Activated naive CD4-positive, alpha-beta T cell treated with anti-CD3 and anti-CD28 coated beads for 36 hours (primary cell): ENCODE measurements at regions of chrX and their contacts with region 1.

Region 1: GRCh38 chrX:16870095-16870860 is at the start of gene RBBP7:
- DNase-seq: peak; percentile 91
- H3K4me3 Mint-ChIP-seq: peak within 1 kb of the TSS; percentile 96
- H3K27ac Mint-ChIP-seq: peak within 1 kb of the TSS; percentile 98
- H3K4me1 Mint-ChIP-seq: peaks cover 25% of the 10 kb centered on the region
- H3K27me3 Mint-ChIP-seq: no peaks in the 10 kb centered on the region
- total RNA-seq, gene RBBP7: 213 to 228 TPM

Region 2: GRCh38 chrX:16678689-16679088 is 191.6 kb before region 1 on chrX:
- CTCF ChIA-PET with region 1: no interaction called
- intact Hi-C with region 1: no loop called
- DNase-seq: no peak
- H3K4me3 Mint-ChIP-seq: no peak overlapping the region
- H3K27ac Mint-ChIP-seq: no peak overlapping the region
- H3K4me1 Mint-ChIP-seq: no peaks in the 10 kb centered on the region
- H3K27me3 Mint-ChIP-seq: no peaks in the 10 kb centered on the region

Region 3: DNA sequence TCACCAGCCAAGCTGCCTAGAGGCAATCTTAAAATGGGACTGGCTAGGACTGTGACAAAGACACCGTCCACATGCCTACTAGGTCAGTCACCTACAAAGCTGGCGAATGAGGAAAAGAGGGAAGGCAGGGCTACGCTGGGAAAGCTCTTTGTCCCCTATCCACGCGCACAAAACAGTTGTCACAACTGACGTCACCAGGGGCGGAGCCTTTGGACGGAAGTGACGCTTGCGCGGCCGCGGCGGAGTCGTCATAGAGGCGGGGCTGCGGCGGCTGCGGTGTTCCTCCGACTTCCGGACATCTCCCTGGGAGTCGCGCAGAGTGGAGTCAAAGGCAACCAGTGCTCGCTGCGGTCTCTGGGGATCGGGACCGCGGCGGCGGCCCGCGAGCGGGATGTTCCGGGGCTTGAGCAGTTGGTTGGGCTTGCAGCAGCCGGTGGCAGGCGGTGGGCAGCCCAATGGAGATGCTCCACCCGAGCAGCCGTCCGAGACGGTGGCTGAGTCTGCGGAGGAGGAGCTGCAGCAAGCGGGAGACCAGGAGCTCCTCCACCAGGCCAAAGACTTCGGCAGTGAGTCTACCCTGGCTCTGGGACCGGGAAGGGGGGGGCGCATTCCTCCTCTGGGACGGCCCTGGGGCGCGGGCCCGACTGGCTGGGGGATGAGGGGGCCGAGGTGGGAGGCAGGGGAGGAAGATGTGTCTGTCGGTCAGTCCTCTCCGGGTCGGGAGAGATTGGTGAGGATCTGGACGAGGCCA is 150.8 kb before region 1 on chrX and contains the start of gene SYAP1:
- CTCF ChIA-PET with region 1: no interaction called
- intact Hi-C with region 1: loop called (anchors 5 kb)
- DNase-seq: peak; percentile 93
- H3K4me3 Mint-ChIP-seq: peak within 1 kb of the TSS; percentile 89
- H3K27ac Mint-ChIP-seq: peak within 1 kb of the TSS; percentile 92
- H3K4me1 Mint-ChIP-seq: peaks cover 33% of the 10 kb centered on the region
- H3K27me3 Mint-ChIP-seq: no peaks in the 10 kb centered on the region
- total RNA-seq, gene SYAP1: 17.1 to 18.9 TPM

Region 4: DNA sequence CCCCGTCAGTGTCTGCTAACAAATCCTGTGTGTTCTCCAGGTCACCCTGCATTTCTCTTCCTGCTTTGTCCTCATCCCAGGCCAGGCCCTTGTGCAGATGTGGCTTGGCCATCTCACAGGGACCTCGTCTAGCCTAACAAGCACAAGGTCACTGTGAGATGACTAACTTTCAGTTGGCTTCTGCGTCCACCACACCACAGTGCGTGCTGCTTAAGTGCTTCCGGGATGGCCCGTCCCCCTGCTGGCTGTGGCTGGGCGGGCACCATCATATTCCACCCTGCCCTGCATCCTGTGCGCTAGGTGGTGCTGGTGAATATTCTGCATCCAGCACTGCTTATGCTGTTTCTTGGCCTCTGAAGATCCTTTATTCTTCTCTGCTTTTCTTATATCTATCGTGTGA is 33.9 kb before region 1 on chrX:
- CTCF ChIA-PET with region 1: interaction called, 4 read pairs
- intact Hi-C with region 1: loop called (anchors 5 kb)
- DNase-seq: no peak
- H3K4me3 Mint-ChIP-seq: no peak overlapping the region
- H3K27ac Mint-ChIP-seq: peak overlapping the region; percentile 70
- H3K4me1 Mint-ChIP-seq: peaks cover 11% of the 10 kb centered on the region
- H3K27me3 Mint-ChIP-seq: no peaks in the 10 kb centered on the region

Region 5: GRCh38 chrX:16882702-16883486 is 12.6 kb after region 1 on chrX:
- CTCF ChIA-PET with region 1: interaction called, 21 read pairs
- intact Hi-C with region 1: loop called (anchors 1 kb)
- DNase-seq: peak; percentile 83
- H3K4me3 Mint-ChIP-seq: peak overlapping the region; percentile 73
- H3K27ac Mint-ChIP-seq: peak overlapping the region; percentile 72
- H3K4me1 Mint-ChIP-seq: no peaks in the 10 kb centered on the region
- H3K27me3 Mint-ChIP-seq: no peaks in the 10 kb centered on the region

Region 6: GRCh38 chrX:16946361-16946964 is 76.2 kb after region 1 on chrX and contains the start of gene REPS2:
- CTCF ChIA-PET with region 1: no interaction called
- intact Hi-C with region 1: loop called (anchors 1 kb)
- DNase-seq: peak; percentile 83
- H3K4me3 Mint-ChIP-seq: peak within 1 kb of the TSS; percentile 71
- H3K27ac Mint-ChIP-seq: no peak within 1 kb of the TSS
- H3K4me1 Mint-ChIP-seq: peaks cover 2% of the 10 kb centered on the region
- H3K27me3 Mint-ChIP-seq: no peaks in the 10 kb centered on the region
- total RNA-seq, gene REPS2: not detected